GM12878 (cell line): ENCODE measurements at regions of chr9 and their contacts with region 1.

Region 1: GRCh38 chr9:84404095-84404686 is 63.6 kb upstream of the SLC28A3 start:
- DNase-seq: no peak
- ATAC-seq: peak; percentile 47; the same call in 2 of the 3 replicates
- H3K4me3 ChIP-seq: no peak overlapping the region
- H3K27ac ChIP-seq: no peak overlapping the region
- H3K4me1 ChIP-seq: no peaks in the 10 kb centered on the region
- H3K27me3 ChIP-seq: no peaks in the 10 kb centered on the region
- CTCF ChIP-seq: peak; percentile 67 to 76 (median 71)
- EP300 ChIP-seq: no peak
- POLR2A ChIP-seq: no peak
- RAD21 ChIP-seq: peak; percentile 59

Region 2: GRCh38 chr9:84442712-84443111 is 38.5 kb after region 1 on chr9:
- CTCF ChIA-PET with region 1: no interaction called
- POLR2A ChIA-PET with region 1: no interaction called
- RAD21 ChIA-PET with region 1: no interaction called
- SMC1A ChIA-PET with region 1: no interaction called
- in situ Hi-C with region 1: loop called (anchors 5 kb)
- intact Hi-C with region 1: no loop called
- DNase-seq: no peak
- ATAC-seq: no peak
- H3K4me3 ChIP-seq: no peak overlapping the region
- H3K27ac ChIP-seq: no peak overlapping the region
- H3K4me1 ChIP-seq: no peaks in the 10 kb centered on the region
- H3K27me3 ChIP-seq: peaks cover 0 to 3% of the 10 kb centered on the region in 2 experiments; a peak in 2 of 4 replicates
- CTCF ChIP-seq: no peak
- EP300 ChIP-seq: no peak
- POLR2A ChIP-seq: no peak
- RAD21 ChIP-seq: no peak

Region 3: DNA sequence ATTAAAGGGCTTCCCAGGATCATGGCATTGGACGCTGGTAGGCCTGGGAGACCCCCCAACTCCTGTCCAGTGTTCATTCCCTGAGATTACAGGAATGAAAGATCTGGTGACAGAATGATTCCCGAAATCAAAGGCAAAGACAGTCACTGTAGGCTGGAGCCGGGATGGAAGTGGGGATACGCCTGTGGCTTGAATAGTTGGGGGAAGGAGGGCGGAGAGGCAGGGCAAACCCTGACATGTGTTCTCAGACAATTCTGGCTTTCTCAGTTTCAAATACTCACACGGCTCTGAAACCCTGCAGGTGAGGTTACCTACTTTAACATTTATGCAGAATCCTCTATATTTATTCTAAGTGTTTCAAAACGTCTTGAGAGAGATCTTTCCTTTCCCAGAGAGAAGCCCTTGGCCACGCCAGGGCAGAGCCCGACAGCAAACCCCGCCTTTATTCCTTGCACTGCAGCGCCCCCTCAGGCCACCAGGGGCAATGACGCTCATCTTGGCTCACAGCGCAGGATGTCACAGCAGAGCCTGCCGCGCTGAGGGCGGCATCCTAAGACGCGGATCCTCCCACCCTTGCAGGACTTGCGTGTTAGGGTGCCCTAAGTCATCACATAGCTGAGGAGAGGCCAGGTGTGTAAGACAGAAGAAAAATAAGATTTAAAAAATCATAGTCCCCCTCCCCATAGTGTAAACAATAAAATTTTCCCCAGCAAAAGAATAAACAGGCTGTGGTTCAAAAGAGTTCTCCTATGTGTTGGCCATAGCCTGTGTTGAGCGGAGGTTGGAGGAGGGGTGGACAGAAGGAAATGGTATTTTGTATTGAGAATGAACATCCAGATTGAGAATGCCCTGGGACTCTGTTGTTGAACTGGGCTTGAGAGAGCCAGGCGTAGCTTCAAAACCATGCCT is 549.9 kb after region 1 on chr9:
- CTCF ChIA-PET with region 1: interaction called, 8 read pairs
- POLR2A ChIA-PET with region 1: no interaction called
- RAD21 ChIA-PET with region 1: no interaction called
- SMC1A ChIA-PET with region 1: no interaction called
- in situ Hi-C with region 1: loop called (anchors 5 kb)
- intact Hi-C with region 1: no loop called
- DNase-seq: no peak
- ATAC-seq: peak; percentile 99
- H3K4me3 ChIP-seq: no peak overlapping the region
- H3K27ac ChIP-seq: no peak overlapping the region
- H3K4me1 ChIP-seq: no peaks in the 10 kb centered on the region
- H3K27me3 ChIP-seq: no peaks in the 10 kb centered on the region
- CTCF ChIP-seq: peak; percentile 93 to 95 (median 94)
- EP300 ChIP-seq: no peak
- POLR2A ChIP-seq: no peak
- RAD21 ChIP-seq: peak; percentile 83

Region 4: GRCh38 chr9:85155352-85155751 is 751.2 kb after region 1 on chr9:
- CTCF ChIA-PET with region 1: no interaction called
- POLR2A ChIA-PET with region 1: no interaction called
- RAD21 ChIA-PET with region 1: no interaction called
- SMC1A ChIA-PET with region 1: no interaction called
- in situ Hi-C with region 1: loop called (anchors 10 kb)
- intact Hi-C with region 1: no loop called
- DNase-seq: no peak
- ATAC-seq: no peak
- H3K4me3 ChIP-seq: no peak overlapping the region
- H3K27ac ChIP-seq: no peak overlapping the region
- H3K4me1 ChIP-seq: no peaks in the 10 kb centered on the region
- H3K27me3 ChIP-seq: no peaks in the 10 kb centered on the region; a peak in 1 of 4 replicates
- CTCF ChIP-seq: no peak
- EP300 ChIP-seq: no peak
- POLR2A ChIP-seq: no peak
- RAD21 ChIP-seq: no peak

Region 5: DNA sequence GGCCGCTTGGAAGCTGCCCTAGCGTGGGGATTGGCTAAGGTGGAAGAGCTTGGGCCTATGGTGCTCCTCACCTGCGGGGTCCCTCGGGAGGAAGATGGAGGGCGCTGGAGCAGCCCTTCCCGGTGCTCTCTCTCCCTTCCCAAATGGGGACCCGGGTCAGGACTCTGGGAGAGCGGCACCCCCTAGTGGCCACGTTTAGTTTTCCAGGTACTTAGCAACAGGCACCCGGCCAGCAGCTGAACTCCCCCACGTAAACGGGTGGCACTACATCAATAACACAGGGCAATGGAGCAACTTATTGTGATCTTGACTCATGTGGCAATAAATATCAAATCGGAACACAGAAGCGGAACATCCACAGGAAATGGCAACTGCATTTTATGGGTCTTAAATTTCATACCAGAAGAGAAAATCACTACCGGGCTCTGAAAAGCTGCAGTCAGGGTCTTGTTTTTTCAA is 1021.0 kb after region 1 on chr9:
- CTCF ChIA-PET with region 1: interaction called, 4 read pairs
- POLR2A ChIA-PET with region 1: no interaction called
- RAD21 ChIA-PET with region 1: interaction called, 3 read pairs
- SMC1A ChIA-PET with region 1: interaction called, 3 read pairs
- in situ Hi-C with region 1: loop called (anchors 10 kb)
- intact Hi-C with region 1: no loop called
- DNase-seq: no peak
- ATAC-seq: peak; percentile 87
- H3K4me3 ChIP-seq: no peak overlapping the region
- H3K27ac ChIP-seq: no peak overlapping the region
- H3K4me1 ChIP-seq: no peaks in the 10 kb centered on the region
- H3K27me3 ChIP-seq: no peaks in the 10 kb centered on the region
- CTCF ChIP-seq: peak; percentile 61 to 68 (median 66)
- EP300 ChIP-seq: no peak
- POLR2A ChIP-seq: no peak
- RAD21 ChIP-seq: peak; percentile 69